BJ (cell line): ENCODE measurements at regions of chr17 and their contacts with region 1.

Region 1: GRCh38 chr17:59004338-59005111 is 102.2 kb downstream of the TRIM37 start:
- DNase-seq: no peak
- H3K4me3 ChIP-seq: no peak overlapping the region
- H3K27me3 ChIP-seq: no peaks in the 10 kb centered on the region
- CTCF ChIP-seq: peak; percentile 91

Region 2: GRCh38 chr17:58517734-58518609 is 486.6 kb before region 1 on chr17:
- CTCF ChIA-PET with region 1: interaction called, 45 read pairs
- POLR2A ChIA-PET with region 1: no interaction called
- DNase-seq: peak; percentile 99
- H3K4me3 ChIP-seq: peak overlapping the region; percentile 70
- H3K27me3 ChIP-seq: no peaks in the 10 kb centered on the region
- CTCF ChIP-seq: no peak

Region 3: GRCh38 chr17:58577642-58578091 is 426.9 kb before region 1 on chr17:
- CTCF ChIA-PET with region 1: interaction called, 14 read pairs
- POLR2A ChIA-PET with region 1: no interaction called
- DNase-seq: no peak
- H3K4me3 ChIP-seq: no peak overlapping the region
- H3K27me3 ChIP-seq: no peaks in the 10 kb centered on the region; the same call in 1 of the 2 replicates
- CTCF ChIP-seq: peak; percentile 79

Region 4: DNA sequence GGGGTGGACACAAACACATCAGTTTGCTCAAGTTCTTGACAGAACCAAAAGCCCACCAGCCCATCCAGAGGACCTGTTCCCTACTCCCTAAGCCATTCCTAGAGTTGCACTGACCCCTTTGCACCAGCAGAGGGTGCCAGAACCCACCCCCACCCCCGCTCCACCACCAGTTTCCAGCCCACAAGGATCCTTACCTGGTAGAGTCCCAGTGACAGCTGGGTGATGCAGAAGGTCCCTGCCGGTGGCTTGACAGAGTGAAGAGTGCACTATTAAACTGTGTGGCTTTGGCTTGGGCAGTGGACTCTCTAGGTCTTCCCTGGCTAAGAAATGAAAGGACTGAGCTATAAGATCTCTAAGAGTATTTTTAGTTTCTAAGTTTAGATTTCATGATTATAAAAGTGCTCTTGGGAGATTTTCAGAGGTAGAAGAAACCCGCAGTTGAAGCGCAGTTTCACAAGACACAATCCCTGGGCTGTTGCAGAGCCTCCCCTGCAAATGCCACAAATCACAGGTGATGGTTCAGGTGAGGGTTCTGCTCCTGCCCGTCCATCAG is 416.7 kb before region 1 on chr17:
- CTCF ChIA-PET with region 1: interaction called, 22 read pairs
- POLR2A ChIA-PET with region 1: no interaction called
- DNase-seq: no peak
- H3K4me3 ChIP-seq: no peak overlapping the region
- H3K27me3 ChIP-seq: no peaks in the 10 kb centered on the region
- CTCF ChIP-seq: peak; percentile 99

Region 5: DNA sequence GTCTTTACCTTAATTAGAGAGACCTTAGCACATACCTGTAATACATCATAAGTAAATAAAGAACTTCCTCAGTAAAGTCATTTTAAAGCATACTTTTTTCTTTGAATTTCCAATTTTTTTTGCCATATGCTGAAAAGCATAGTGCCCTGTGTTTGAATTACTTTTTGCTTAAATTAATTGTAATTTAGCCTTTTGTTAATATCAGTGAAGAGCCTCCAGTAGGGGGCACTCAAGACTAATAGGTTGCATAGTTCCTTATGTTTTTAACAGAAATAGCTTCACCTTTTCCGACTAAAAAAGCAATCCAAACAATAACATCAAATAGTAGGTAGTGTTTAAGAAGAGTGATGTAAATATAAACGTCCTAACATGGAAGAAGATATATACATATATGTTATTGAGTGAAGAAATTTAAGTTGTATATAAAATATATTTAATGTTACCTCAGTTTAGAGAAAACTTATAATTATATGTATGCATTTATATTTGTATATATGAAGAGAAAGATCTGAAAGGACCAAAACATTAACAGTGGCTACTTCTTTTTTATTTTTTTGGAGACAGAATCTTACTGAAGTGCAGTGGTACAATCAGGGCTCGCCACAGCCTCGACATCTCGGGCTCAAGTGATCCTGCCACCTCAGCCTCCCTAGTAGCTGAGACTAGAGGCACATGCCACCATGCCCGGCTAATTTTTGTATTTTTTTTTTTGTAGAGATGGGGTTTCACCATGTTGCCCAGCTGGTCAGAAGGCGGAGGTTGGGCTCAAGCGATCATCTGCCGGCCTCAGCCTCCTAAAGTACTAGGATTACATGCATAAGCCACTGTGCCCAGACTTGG is 293.4 kb before region 1 on chr17:
- CTCF ChIA-PET with region 1: interaction called, 39 read pairs
- POLR2A ChIA-PET with region 1: no interaction called
- DNase-seq: no peak
- H3K4me3 ChIP-seq: no peak overlapping the region
- H3K27me3 ChIP-seq: no peaks in the 10 kb centered on the region
- CTCF ChIP-seq: peak; percentile 66

Region 6: DNA sequence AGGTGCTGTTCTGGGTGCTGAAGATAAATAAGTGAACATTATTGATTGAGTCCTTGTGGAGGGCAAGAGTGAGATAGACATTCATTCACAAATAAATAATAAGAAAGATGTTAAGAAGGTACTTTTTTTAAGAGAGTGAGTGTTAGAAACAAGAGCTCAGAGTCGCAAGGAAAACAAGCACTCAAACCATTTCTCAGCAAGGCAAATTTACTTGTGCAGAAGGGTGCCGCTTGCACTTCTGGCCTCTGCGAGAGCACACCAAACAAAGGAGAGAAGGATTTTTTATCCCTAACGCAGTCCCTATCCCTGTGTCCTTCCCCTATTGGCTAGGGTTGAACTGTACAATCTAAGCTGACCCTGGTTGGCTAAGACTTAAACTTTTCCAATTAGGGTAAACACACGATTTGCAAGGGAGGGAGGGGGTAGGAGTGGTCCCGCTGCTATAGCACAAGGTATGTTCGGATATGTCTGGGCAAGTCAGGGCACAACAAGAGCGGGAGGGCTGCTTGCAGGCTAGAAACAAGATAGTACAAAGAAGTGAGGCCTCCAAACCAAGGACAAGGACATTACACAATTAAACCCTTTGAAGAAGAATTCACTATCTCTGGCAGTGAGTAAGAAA is 92.7 kb before region 1 on chr17:
- CTCF ChIA-PET with region 1: no interaction called
- POLR2A ChIA-PET with region 1: no interaction called
- DNase-seq: no peak
- H3K4me3 ChIP-seq: no peak overlapping the region
- H3K27me3 ChIP-seq: no peaks in the 10 kb centered on the region
- CTCF ChIP-seq: no peak

Region 7: DNA sequence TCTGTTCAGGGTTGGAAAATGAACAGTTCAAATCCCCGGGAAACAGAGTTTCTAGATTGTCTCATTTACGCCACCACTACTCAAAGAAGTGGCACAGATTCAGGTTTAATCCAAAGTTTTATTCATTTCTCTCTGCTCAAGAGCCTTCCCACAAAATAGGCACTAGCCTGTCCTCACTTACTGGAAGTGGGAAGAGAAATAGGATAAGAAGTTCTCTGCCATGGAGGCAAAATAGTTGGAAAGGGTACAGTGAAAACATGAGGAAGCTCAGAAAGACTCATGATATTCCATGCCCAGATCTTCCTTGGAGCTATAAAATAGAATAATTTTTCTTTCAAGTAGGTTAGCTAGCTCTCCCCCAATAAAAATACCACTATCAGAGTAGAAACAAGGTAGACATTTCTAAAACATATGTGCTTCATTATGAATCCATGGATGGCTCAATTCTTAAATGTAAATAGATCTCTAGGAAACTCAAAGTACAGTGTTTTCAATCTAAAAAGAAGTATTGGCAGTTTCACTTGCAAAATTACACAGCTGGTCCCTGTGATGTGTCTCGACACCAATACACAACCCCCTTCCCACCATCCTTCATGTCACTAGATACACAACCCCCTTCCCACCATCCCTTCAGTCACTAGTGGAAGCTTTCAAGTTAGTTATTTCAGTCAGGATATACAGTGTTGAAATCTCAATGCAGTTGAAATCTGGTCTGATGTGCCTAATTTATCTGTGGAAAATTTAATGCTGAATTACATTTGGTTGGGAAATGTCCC is 23.6 kb before region 1 on chr17:
- CTCF ChIA-PET with region 1: no interaction called
- POLR2A ChIA-PET with region 1: no interaction called
- DNase-seq: no peak
- H3K4me3 ChIP-seq: no peak overlapping the region
- H3K27me3 ChIP-seq: no peaks in the 10 kb centered on the region
- CTCF ChIP-seq: no peak

Region 8: DNA sequence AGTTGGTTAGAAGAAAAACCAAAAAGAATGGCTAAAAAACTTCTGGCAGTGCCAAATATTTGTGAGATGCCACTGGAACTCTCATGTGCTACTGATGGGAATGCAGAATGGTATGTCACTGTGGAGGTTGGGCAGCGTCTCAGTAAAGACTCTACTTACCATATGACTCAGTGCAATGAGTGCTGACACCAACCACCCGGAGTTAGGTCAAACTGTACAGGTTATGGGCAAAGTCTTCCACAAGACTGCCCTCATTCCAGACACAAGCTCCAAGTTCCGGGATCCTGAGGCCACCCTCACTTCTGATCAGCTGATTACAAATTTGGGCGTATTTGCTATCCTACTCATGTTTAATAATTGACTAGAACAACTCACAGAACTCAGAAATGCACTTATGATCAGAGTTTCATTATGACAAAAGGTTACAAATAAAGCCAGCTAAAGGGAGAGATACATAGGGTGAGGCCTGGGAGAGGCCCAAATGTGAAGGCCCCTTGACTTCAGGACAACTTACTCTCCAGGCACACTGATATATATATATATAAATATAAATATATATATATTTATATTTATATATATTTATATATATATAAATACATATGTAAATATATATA is 12.7 kb before region 1 on chr17:
- CTCF ChIA-PET with region 1: interaction called, 15 read pairs
- POLR2A ChIA-PET with region 1: no interaction called
- DNase-seq: peak; percentile 23
- H3K4me3 ChIP-seq: no peak overlapping the region
- H3K27me3 ChIP-seq: no peaks in the 10 kb centered on the region
- CTCF ChIP-seq: no peak

Region 9: DNA sequence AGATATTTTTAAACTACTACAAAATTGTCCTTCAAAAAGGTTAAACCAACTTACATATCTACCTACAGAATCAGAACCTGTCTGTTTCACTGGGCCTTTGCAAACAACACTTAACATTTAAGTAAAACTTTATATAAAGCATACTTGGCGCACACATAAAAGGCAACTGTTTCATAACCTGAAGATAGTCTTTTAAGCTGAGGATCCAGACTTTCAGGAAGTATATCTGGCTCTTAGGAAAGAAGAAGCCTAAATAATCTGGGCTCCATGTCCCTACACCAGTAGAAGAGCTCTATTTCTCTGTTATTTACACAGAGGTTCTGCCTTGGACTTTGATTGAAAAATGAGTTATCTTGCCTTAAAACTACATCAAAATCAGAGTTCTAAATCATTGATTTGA is 26.3 kb after region 1 on chr17:
- CTCF ChIA-PET with region 1: no interaction called
- POLR2A ChIA-PET with region 1: no interaction called
- DNase-seq: no peak
- H3K4me3 ChIP-seq: no peak overlapping the region
- H3K27me3 ChIP-seq: no peaks in the 10 kb centered on the region
- CTCF ChIP-seq: no peak

Region 10: DNA sequence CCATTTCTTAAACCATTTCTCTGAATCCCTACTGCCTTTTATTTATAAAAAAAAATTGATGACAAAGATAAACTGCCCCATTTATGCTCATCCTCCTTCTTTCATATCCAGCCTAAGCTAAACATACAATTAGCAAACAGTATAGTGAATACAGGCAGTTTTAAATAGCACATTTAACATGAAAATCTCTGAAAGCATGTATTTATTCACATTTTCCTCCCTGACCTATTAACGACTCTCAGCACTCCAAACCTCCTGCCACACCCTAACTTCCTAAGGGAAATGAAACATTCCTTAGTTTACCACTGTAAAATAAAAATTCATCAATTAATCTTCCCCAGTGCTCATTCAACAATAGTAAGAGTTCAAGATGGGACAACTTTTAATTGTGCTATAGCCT is 45.3 kb after region 1 on chr17:
- CTCF ChIA-PET with region 1: no interaction called
- POLR2A ChIA-PET with region 1: no interaction called
- DNase-seq: no peak
- H3K4me3 ChIP-seq: no peak overlapping the region
- H3K27me3 ChIP-seq: no peaks in the 10 kb centered on the region
- CTCF ChIP-seq: no peak